Heart left ventricle (tissue), 16 donors: ENCODE measurements at regions of chr13 and their contacts with region 1.

Region 1: DNA sequence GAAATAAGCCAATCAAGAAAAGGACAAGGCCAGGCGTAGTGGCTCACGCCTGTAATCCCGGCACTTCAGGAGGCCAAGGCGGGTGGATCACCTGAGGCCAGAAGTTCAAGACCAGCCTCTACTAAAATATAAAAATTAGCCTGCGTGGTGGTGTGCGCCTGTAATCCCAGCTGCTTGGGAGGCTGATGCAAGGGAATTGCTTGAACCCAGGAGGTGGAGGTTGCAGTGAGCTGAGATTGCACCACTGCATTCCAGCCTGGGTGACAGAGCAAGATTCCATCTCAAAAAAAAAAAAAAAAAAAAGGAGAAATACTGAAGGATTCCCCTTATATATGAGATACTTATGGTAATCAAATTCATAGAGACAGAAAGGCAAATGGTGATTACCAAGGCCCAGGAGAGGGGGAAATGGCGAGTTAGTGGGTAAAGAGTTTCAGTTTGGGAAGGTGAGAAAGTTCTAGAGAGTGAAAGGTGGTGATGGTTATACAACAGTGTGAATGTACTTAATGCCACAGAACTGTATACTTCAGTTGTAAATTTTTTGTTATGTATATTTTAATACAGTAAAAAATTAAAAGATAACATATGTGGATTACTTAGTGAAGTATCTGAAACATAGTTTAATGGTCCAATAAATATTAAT is 90.3 kb downstream of the DHRS12 start:
- DNase-seq: no peak
- ATAC-seq: no peak
- H3K4me3 ChIP-seq: no peak overlapping the region
- H3K27ac ChIP-seq: no peak overlapping the region
- H3K4me1 ChIP-seq: no peaks in the 10 kb centered on the region
- H3K27me3 ChIP-seq: no peaks in the 10 kb centered on the region
- CTCF ChIP-seq: no peak
- POLR2A ChIP-seq: no peak

Region 2: GRCh38 chr13:51681037-51681678 is 32.5 kb before region 1 on chr13:
- intact Hi-C with region 1: loop called in 1 of 10 experiments (anchors 1 kb)
- DNase-seq: no peak
- ATAC-seq: no peak
- H3K4me3 ChIP-seq: no peak overlapping the region
- H3K27ac ChIP-seq: no peak overlapping the region
- H3K4me1 ChIP-seq: peaks cover 0 to 8% (median 0%) of the 10 kb centered on the region in 12 donors
- H3K27me3 ChIP-seq: no peaks in the 10 kb centered on the region
- CTCF ChIP-seq: no peak
- POLR2A ChIP-seq: no peak